ENCODE measurements at regions of chr2 and their contacts with region 1.

Region 1: GRCh38 chr2:36433311-36434217 is 78.0 kb downstream of the CRIM1 start:
- DNase-seq: peak; percentile 37
- ATAC-seq: peak; percentile 27; the same call in 1 of the 2 replicates
- H3K4me3 ChIP-seq: no peak overlapping the region
- H3K27ac ChIP-seq: no peak overlapping the region
- H3K4me1 ChIP-seq: peaks cover 12% of the 10 kb centered on the region
- H3K27me3 ChIP-seq: no peaks in the 10 kb centered on the region
- CTCF ChIP-seq: no peak

Region 2: DNA sequence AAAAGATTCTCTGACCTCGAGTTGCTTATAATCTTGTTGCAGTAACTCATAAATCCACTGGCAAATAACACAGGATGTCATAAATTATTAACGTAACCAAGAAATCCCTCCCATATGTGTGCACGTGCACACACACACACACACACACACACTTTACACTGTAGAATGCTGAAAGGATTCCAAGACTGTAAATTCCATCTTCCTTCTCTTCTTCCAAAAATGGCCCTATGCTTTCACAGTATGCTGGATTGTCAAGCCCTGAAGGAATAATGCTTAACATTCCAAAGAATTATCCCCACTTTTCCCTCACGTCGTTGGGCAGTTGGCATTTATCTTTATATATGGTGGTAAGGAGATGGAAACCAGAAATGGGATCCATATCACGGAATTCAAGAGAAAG is 195.5 kb before region 1 on chr2:
- CTCF ChIA-PET with region 1: no interaction called
- POLR2A ChIA-PET with region 1: no interaction called
- intact Hi-C with region 1: no loop called
- DNase-seq: no peak
- ATAC-seq: no peak
- H3K4me3 ChIP-seq: no peak overlapping the region
- H3K27ac ChIP-seq: no peak overlapping the region
- H3K4me1 ChIP-seq: no peaks in the 10 kb centered on the region
- H3K27me3 ChIP-seq: peaks cover 48% of the 10 kb centered on the region; the same call in 1 of the 2 replicates
- CTCF ChIP-seq: no peak

Region 3: GRCh38 chr2:36277146-36277808 is 156.3 kb before region 1 on chr2:
- CTCF ChIA-PET with region 1: no interaction called
- POLR2A ChIA-PET with region 1: no interaction called
- intact Hi-C with region 1: no loop called
- DNase-seq: peak; percentile 90
- ATAC-seq: peak; percentile 97
- H3K4me3 ChIP-seq: no peak overlapping the region
- H3K27ac ChIP-seq: peak overlapping the region; percentile 54
- H3K4me1 ChIP-seq: peaks cover 4% of the 10 kb centered on the region; the same call in 1 of the 2 replicates
- H3K27me3 ChIP-seq: 0 out of 2 replicates have a peak, but pooled peaks cover 5% of the 10 kb centered on the region
- CTCF ChIP-seq: no peak

Region 4: DNA sequence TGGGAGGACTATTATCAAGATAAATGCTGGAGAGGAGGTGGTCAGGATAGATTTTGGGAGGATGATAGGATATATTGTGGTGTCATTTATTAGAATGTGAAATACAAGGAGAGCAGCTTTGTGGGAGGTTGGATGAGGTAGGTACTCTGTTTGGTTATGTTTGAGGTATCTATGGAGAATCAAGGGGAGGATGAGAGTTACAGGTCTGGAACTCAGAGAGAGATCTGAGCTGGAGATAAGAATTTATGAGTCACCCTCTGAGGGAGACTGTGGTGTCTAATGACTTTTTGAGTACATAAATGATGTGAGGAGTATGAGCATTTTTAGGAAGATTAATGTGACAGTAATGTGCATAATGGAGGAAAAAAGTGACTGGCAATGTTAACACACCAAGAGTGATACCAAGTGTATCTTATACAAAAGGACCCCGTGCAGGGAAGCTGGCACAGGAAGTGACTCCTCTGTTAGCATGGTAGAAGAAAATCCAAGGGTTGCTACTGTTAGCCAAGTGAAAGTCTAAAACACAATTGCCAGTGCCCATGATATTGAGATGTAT is 29.8 kb before region 1 on chr2:
- CTCF ChIA-PET with region 1: no interaction called
- POLR2A ChIA-PET with region 1: interaction called, 14 read pairs
- intact Hi-C with region 1: no loop called
- DNase-seq: peak; percentile 99
- ATAC-seq: peak; percentile 90
- H3K4me3 ChIP-seq: peak overlapping the region; percentile 54
- H3K27ac ChIP-seq: peak overlapping the region; percentile 97
- H3K4me1 ChIP-seq: peaks cover 38% of the 10 kb centered on the region
- H3K27me3 ChIP-seq: no peaks in the 10 kb centered on the region
- CTCF ChIP-seq: no peak